PC-3 (cell line): ENCODE measurements at regions of chr1 and their contacts with region 1.

Region 1: GRCh38 chr1:59139396-59139795 is 157.5 kb upstream of the FGGY start:
- DNase-seq: peak; percentile 92
- ATAC-seq: peak; percentile 68
- H3K4me3 ChIP-seq: no peak overlapping the region
- H3K27ac ChIP-seq: peak overlapping the region; percentile 75
- H3K4me1 ChIP-seq: peaks cover 61% of the 10 kb centered on the region
- H3K27me3 ChIP-seq: no peaks in the 10 kb centered on the region
- CTCF ChIP-seq: no peak

Region 2: GRCh38 chr1:58710190-58711085 is 429.0 kb before region 1 on chr1:
- CTCF ChIA-PET with region 1: interaction called, 12 read pairs
- POLR2A ChIA-PET with region 1: no interaction called
- intact Hi-C with region 1: no loop called
- DNase-seq: no peak
- ATAC-seq: no peak
- H3K4me3 ChIP-seq: no peak overlapping the region
- H3K27ac ChIP-seq: no peak overlapping the region
- H3K4me1 ChIP-seq: no peaks in the 10 kb centered on the region
- H3K27me3 ChIP-seq: no peaks in the 10 kb centered on the region
- CTCF ChIP-seq: no peak